GM12878 (cell line): ENCODE measurements at regions of chr1 and their contacts with region 1.

Region 1: GRCh38 chr1:198788561-198789064 is 149.8 kb downstream of the PTPRC start:
- DNase-seq: no peak
- ATAC-seq: peak; percentile 99
- H3K4me3 ChIP-seq: no peak overlapping the region
- H3K27ac ChIP-seq: no peak overlapping the region
- H3K4me1 ChIP-seq: no peaks in the 10 kb centered on the region
- H3K27me3 ChIP-seq: no peaks in the 10 kb centered on the region
- CTCF ChIP-seq: peak; percentile 30 to 37 (median 32); a peak in 3 of 6 replicates
- EP300 ChIP-seq: peak in 1 of 2 experiments; percentile 11; a peak in 1 of 4 replicates
- POLR2A ChIP-seq: no peak
- RAD21 ChIP-seq: peak; percentile 48; the same call in 1 of the 2 replicates

Region 2: GRCh38 chr1:198756470-198756869 is 32.1 kb before region 1 on chr1:
- CTCF ChIA-PET with region 1: interaction called, 18 read pairs
- POLR2A ChIA-PET with region 1: no interaction called
- RAD21 ChIA-PET with region 1: interaction called, 3 read pairs
- SMC1A ChIA-PET with region 1: interaction called, 11 read pairs
- in situ Hi-C with region 1: no loop called
- intact Hi-C with region 1: no loop called
- DNase-seq: no peak
- ATAC-seq: peak; percentile 58; the same call in 2 of the 3 replicates
- H3K4me3 ChIP-seq: no peak overlapping the region
- H3K27ac ChIP-seq: no peak overlapping the region
- H3K4me1 ChIP-seq: no peaks in the 10 kb centered on the region
- H3K27me3 ChIP-seq: no peaks in the 10 kb centered on the region
- CTCF ChIP-seq: peak in 1 of 3 experiments; percentile 5; a peak in 1 of 6 replicates
- EP300 ChIP-seq: no peak
- POLR2A ChIP-seq: no peak
- RAD21 ChIP-seq: no peak

Region 3: GRCh38 chr1:198763298-198763714 is 25.3 kb before region 1 on chr1:
- CTCF ChIA-PET with region 1: interaction called, 18 read pairs
- POLR2A ChIA-PET with region 1: no interaction called
- RAD21 ChIA-PET with region 1: interaction called, 3 read pairs
- SMC1A ChIA-PET with region 1: interaction called, 23 read pairs
- in situ Hi-C with region 1: no loop called
- intact Hi-C with region 1: no loop called
- DNase-seq: no peak
- ATAC-seq: peak; percentile 44
- H3K4me3 ChIP-seq: no peak overlapping the region
- H3K27ac ChIP-seq: no peak overlapping the region
- H3K4me1 ChIP-seq: no peaks in the 10 kb centered on the region
- H3K27me3 ChIP-seq: no peaks in the 10 kb centered on the region
- CTCF ChIP-seq: no peak
- EP300 ChIP-seq: no peak
- POLR2A ChIP-seq: no peak
- RAD21 ChIP-seq: no peak

Region 4: GRCh38 chr1:198771563-198772153 is 17.0 kb before region 1 on chr1:
- CTCF ChIA-PET with region 1: interaction called, 10 read pairs
- POLR2A ChIA-PET with region 1: interaction called, 3 read pairs
- RAD21 ChIA-PET with region 1: interaction called, 6 read pairs
- SMC1A ChIA-PET with region 1: interaction called, 23 read pairs
- in situ Hi-C with region 1: no loop called
- intact Hi-C with region 1: no loop called
- DNase-seq: peak; percentile 20
- ATAC-seq: peak; percentile 70
- H3K4me3 ChIP-seq: no peak overlapping the region
- H3K27ac ChIP-seq: no peak overlapping the region
- H3K4me1 ChIP-seq: no peaks in the 10 kb centered on the region
- H3K27me3 ChIP-seq: no peaks in the 10 kb centered on the region
- CTCF ChIP-seq: peak; percentile 35 to 61 (median 41); a peak in 5 of 6 replicates
- EP300 ChIP-seq: no peak
- POLR2A ChIP-seq: no peak
- RAD21 ChIP-seq: peak; percentile 98

Region 5: DNA sequence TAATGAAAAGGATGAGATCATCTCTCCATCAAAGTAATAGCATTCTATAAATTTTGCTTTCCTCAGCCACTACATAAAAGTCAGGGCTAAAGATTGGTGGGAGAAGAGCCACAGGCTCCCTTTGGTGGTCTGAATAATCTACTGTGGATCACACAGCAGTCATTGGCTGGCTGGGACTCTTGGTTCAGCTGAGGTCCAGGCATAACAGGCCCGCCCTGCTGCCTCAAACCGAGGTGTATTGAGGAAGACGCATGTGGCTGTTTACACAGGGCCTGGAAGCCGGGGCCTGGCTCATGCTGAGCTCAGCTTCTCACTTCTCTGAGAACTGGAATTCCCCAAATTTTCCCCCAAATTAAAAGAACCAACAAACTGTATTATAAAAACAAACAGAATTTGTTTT is 10.6 kb before region 1 on chr1:
- CTCF ChIA-PET with region 1: interaction called, 11 read pairs
- POLR2A ChIA-PET with region 1: interaction called, 4 read pairs
- RAD21 ChIA-PET with region 1: interaction called, 8 read pairs
- SMC1A ChIA-PET with region 1: interaction called, 17 read pairs
- in situ Hi-C with region 1: no loop called
- intact Hi-C with region 1: no loop called
- DNase-seq: no peak
- ATAC-seq: peak; percentile 76
- H3K4me3 ChIP-seq: no peak overlapping the region
- H3K27ac ChIP-seq: no peak overlapping the region
- H3K4me1 ChIP-seq: no peaks in the 10 kb centered on the region
- H3K27me3 ChIP-seq: no peaks in the 10 kb centered on the region
- CTCF ChIP-seq: no peak
- EP300 ChIP-seq: no peak
- POLR2A ChIP-seq: no peak
- RAD21 ChIP-seq: no peak

Region 6: GRCh38 chr1:198798923-198799386 is 10.3 kb after region 1 on chr1:
- CTCF ChIA-PET with region 1: interaction called, 17 read pairs
- POLR2A ChIA-PET with region 1: no interaction called
- RAD21 ChIA-PET with region 1: interaction called, 21 read pairs
- SMC1A ChIA-PET with region 1: interaction called, 8 read pairs
- in situ Hi-C with region 1: no loop called
- intact Hi-C with region 1: no loop called
- DNase-seq: peak; percentile 57
- ATAC-seq: peak; percentile 86
- H3K4me3 ChIP-seq: no peak overlapping the region
- H3K27ac ChIP-seq: no peak overlapping the region
- H3K4me1 ChIP-seq: no peaks in the 10 kb centered on the region
- H3K27me3 ChIP-seq: no peaks in the 10 kb centered on the region
- CTCF ChIP-seq: peak in 1 of 3 experiments; percentile 28; a peak in 1 of 6 replicates
- EP300 ChIP-seq: peak; percentile 18 to 25; a peak in 1 of 4 replicates
- POLR2A ChIP-seq: no peak
- RAD21 ChIP-seq: peak; percentile 27; the same call in 1 of the 2 replicates